GM12878 (cell line): ENCODE measurements at regions of chr17 and their contacts with region 1.

Region 1: GRCh38 chr17:8222630-8223356 is 12.4 kb upstream of the AURKB start:
- DNase-seq: peak; percentile 81
- ATAC-seq: peak; percentile 56
- H3K4me3 ChIP-seq: peak overlapping the region; percentile 83
- H3K27ac ChIP-seq: peak overlapping the region; percentile 97
- H3K4me1 ChIP-seq: peaks cover 27% of the 10 kb centered on the region
- H3K27me3 ChIP-seq: no peaks in the 10 kb centered on the region
- CTCF ChIP-seq: no peak
- EP300 ChIP-seq: peak in 1 of 2 experiments; percentile 12; a peak in 1 of 4 replicates
- POLR2A ChIP-seq: peak; percentile 81
- RAD21 ChIP-seq: no peak

Region 2: DNA sequence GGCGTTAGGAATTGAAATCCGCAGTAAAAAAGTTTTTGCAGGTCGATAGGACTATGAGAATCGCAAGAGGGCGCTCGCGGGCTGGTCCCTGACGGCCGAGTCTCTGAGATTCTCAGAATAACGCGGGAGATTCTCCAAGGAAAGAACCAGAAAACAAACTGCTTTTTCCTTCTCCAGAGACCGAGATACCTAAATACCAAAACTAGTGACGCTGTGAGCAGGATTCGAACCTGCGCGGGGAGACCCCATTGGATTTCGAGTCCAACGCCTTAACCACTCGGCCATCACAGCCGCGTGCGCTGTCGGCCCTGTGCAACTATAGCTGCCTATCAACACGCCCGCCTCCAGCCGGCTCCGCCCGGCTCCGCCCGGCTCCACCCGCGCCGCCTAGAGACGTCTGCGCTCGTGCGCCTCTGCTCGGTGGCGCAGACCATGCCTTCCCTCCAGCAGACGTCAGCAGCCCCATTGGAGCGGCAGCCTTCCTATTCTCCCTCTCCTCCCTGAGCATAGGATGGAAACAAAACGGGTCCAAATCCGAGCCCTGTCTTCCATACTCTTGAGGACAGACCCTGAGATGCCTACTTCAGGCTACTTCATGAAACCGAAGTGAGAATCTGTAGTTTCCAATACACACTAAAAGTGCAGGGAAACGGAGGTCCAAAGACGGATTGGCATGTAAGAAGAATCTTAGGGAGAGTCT is 84.0 kb before region 1 on chr17:
- CTCF ChIA-PET with region 1: interaction called, 11 read pairs
- POLR2A ChIA-PET with region 1: interaction called, 3 read pairs
- RAD21 ChIA-PET with region 1: interaction called, 6 read pairs
- SMC1A ChIA-PET with region 1: interaction called, 15 read pairs
- in situ Hi-C with region 1: no loop called
- intact Hi-C with region 1: loop called (anchors 5 kb)
- DNase-seq: peak; percentile 94
- ATAC-seq: peak; percentile 93
- H3K4me3 ChIP-seq: peak overlapping the region; percentile 72
- H3K27ac ChIP-seq: peak overlapping the region; percentile 97
- H3K4me1 ChIP-seq: peaks cover 7% of the 10 kb centered on the region
- H3K27me3 ChIP-seq: no peaks in the 10 kb centered on the region
- CTCF ChIP-seq: peak; percentile 68 to 78 (median 76)
- EP300 ChIP-seq: 0 out of 4 replicates have a peak, but pooled peaks of 1 of the 2 experiments have one; percentile 4
- POLR2A ChIP-seq: peak; percentile 81
- RAD21 ChIP-seq: peak; percentile 57

Region 3: DNA sequence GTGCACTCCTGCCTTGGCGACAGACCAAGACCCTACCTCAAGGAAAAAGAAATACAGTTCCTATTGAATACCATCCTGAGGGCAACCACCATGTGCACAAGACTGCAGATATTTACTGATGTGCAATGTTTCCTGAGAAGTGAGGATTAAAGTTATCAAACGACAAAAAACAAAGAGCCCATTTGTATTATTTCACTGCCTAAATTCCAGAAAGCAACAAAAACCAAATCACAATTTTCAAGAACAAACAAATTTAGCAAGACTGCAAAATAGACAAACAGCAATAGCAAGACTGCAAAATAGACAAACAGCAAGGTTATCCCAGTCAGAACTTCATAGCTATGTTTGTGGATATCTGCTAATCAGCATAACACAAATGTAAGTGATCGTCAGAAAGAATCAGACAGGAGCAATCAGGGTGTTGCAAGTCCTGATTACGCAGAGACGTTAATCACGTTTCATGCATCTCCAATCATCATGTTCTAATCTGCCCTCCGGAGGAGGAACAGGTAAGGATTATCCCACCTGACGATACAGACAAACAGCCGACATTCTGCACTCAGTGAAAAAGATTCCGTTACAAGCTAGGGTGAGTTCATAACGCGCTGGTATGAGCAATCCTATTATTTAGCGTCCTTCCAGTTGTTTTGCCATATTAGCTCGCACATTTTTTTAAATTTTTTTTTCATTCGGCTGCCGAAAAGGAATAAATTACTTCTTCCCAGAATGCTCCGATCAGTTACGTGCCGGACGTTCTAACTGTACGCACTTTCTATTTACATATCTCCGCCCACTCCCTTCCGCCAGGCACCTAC is 49.5 kb before region 1 on chr17:
- CTCF ChIA-PET with region 1: no interaction called
- POLR2A ChIA-PET with region 1: interaction called, 7 read pairs
- RAD21 ChIA-PET with region 1: interaction called, 7 read pairs
- SMC1A ChIA-PET with region 1: interaction called, 6 read pairs
- in situ Hi-C with region 1: no loop called
- intact Hi-C with region 1: loop called (anchors 5 kb)
- DNase-seq: peak; percentile 98
- ATAC-seq: peak; percentile 86
- H3K4me3 ChIP-seq: peak overlapping the region; percentile 65
- H3K27ac ChIP-seq: peak overlapping the region; percentile 99
- H3K4me1 ChIP-seq: peaks cover 14% of the 10 kb centered on the region
- H3K27me3 ChIP-seq: no peaks in the 10 kb centered on the region
- CTCF ChIP-seq: no peak
- EP300 ChIP-seq: peak in 1 of 2 experiments; percentile 59; a peak in 2 of 4 replicates
- POLR2A ChIP-seq: peak; percentile 99
- RAD21 ChIP-seq: no peak

Region 4: GRCh38 chr17:8209909-8210760 is 12.7 kb before region 1 on chr17 and contains the start of gene AURKB:
- CTCF ChIA-PET with region 1: interaction called, 21 read pairs
- POLR2A ChIA-PET with region 1: interaction called, 89 read pairs
- RAD21 ChIA-PET with region 1: interaction called, 12 read pairs
- SMC1A ChIA-PET with region 1: interaction called, 56 read pairs
- in situ Hi-C with region 1: no loop called
- intact Hi-C with region 1: no loop called
- DNase-seq: peak; percentile 91
- ATAC-seq: peak; percentile 94
- H3K4me3 ChIP-seq: peak within 1 kb of the TSS; percentile 95
- H3K27ac ChIP-seq: peak within 1 kb of the TSS; percentile 83
- H3K4me1 ChIP-seq: no peaks in the 10 kb centered on the region
- H3K27me3 ChIP-seq: no peaks in the 10 kb centered on the region
- CTCF ChIP-seq: no peak
- EP300 ChIP-seq: no peak; a peak in 1 of 4 replicates
- POLR2A ChIP-seq: peak; percentile 96
- RAD21 ChIP-seq: no peak
- polyA plus RNA-seq, gene AURKB: 107 to 121 TPM

Region 5: GRCh38 chr17:8288336-8289102 is 65.7 kb after region 1 on chr17 and contains the start of gene RANGRF:
- CTCF ChIA-PET with region 1: interaction called, 14 read pairs
- POLR2A ChIA-PET with region 1: interaction called, 6 read pairs
- RAD21 ChIA-PET with region 1: interaction called, 3 read pairs
- SMC1A ChIA-PET with region 1: interaction called, 40 read pairs
- in situ Hi-C with region 1: no loop called
- intact Hi-C with region 1: no loop called
- DNase-seq: peak; percentile 40
- ATAC-seq: peak; percentile 95
- H3K4me3 ChIP-seq: peak within 1 kb of the TSS; percentile 93
- H3K27ac ChIP-seq: peak within 1 kb of the TSS; percentile 92
- H3K4me1 ChIP-seq: peaks cover 19% of the 10 kb centered on the region
- H3K27me3 ChIP-seq: no peaks in the 10 kb centered on the region
- CTCF ChIP-seq: no peak
- EP300 ChIP-seq: no peak
- POLR2A ChIP-seq: peak; percentile 70
- RAD21 ChIP-seq: no peak
- polyA plus RNA-seq, gene RANGRF: 123 to 181 TPM

Region 6: DNA sequence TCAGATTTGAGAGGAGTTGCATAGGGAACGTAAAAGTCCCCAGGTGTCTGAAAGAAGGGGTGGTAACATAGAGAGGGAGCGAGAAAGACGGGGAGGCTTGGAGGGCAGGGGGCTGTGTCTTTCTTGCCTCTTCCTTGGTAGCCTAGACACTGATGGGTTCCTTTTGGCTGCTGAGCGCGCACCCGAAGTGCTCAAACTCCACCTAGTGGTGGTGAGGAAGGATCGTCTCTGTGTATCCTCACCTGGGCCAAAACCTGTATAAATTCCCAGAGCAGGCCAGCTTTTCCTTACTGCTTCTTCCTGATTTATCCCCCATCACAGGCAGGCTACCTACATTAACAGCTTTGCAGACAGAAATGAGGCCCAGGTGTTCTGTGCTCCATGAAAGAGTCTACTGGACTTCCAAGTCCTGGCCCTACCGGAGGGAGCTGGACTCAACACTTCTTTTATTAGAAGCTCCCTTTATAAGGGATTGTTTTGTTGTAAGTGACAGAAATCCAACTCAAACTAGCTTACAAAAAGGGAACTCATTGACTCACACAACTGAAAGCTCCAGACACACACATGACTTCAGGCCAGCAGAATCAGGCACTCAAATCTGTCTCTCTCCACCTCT is 77.9 kb after region 1 on chr17:
- CTCF ChIA-PET with region 1: interaction called, 38 read pairs
- POLR2A ChIA-PET with region 1: interaction called, 31 read pairs
- RAD21 ChIA-PET with region 1: interaction called, 19 read pairs
- SMC1A ChIA-PET with region 1: interaction called, 54 read pairs
- in situ Hi-C with region 1: no loop called
- intact Hi-C with region 1: loop called (anchors 1 kb)
- DNase-seq: peak; percentile 31
- ATAC-seq: peak; percentile 98
- H3K4me3 ChIP-seq: no peak overlapping the region
- H3K27ac ChIP-seq: no peak overlapping the region
- H3K4me1 ChIP-seq: no peaks in the 10 kb centered on the region
- H3K27me3 ChIP-seq: no peaks in the 10 kb centered on the region
- CTCF ChIP-seq: peak; percentile 86 to 96 (median 90); a peak in 5 of 6 replicates
- EP300 ChIP-seq: no peak
- POLR2A ChIP-seq: no peak
- RAD21 ChIP-seq: peak; percentile 90

Region 7: DNA sequence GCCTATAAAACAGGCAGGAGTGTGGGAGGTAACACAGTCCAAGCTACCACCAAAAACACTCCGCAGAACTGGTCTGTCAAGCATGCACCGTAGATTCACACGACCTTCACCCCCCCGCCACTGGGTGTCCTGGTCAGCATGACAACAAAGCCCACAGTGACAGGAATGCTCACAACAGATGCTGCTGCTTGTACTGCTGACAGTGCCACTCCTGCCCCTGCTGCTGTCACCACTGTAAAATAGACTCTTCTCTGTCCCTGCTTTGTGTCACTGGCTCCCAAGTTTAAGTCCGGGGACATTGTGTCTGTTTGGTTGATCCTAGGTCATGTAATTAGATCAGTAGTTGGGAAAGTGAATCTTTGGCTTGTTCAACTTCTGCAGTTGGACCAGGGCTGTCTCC is 109.9 kb after region 1 on chr17:
- CTCF ChIA-PET with region 1: no interaction called
- POLR2A ChIA-PET with region 1: no interaction called
- RAD21 ChIA-PET with region 1: no interaction called
- SMC1A ChIA-PET with region 1: no interaction called
- in situ Hi-C with region 1: no loop called
- intact Hi-C with region 1: no loop called
- DNase-seq: no peak
- ATAC-seq: no peak
- H3K4me3 ChIP-seq: no peak overlapping the region
- H3K27ac ChIP-seq: no peak overlapping the region
- H3K4me1 ChIP-seq: no peaks in the 10 kb centered on the region
- H3K27me3 ChIP-seq: no peaks in the 10 kb centered on the region; a peak in 1 of 4 replicates
- CTCF ChIP-seq: no peak
- EP300 ChIP-seq: no peak
- POLR2A ChIP-seq: no peak
- RAD21 ChIP-seq: no peak

Region 8: DNA sequence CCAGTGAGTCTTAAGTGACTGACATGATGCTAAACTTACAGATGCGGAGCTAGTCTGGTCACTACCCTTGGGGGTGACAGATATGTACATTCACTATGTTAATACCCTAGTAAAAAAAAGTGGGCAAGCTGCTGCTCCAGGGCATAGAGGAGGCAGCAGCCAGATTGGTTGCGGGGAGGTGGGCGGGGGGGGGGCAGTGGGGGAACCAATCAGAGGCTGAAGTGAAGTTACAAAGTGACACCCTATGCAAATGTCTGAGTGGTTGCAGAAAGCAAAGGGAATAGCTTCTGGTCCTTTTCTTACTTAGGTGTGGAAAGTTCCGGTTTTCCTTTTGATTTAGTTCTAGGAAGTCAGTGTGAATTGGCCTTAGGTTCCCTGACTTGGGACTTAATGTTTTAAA is 225.0 kb after region 1 on chr17:
- CTCF ChIA-PET with region 1: no interaction called
- POLR2A ChIA-PET with region 1: no interaction called
- RAD21 ChIA-PET with region 1: no interaction called
- SMC1A ChIA-PET with region 1: no interaction called
- in situ Hi-C with region 1: no loop called
- intact Hi-C with region 1: no loop called
- DNase-seq: no peak
- ATAC-seq: no peak
- H3K4me3 ChIP-seq: no peak overlapping the region
- H3K27ac ChIP-seq: no peak overlapping the region
- H3K4me1 ChIP-seq: no peaks in the 10 kb centered on the region
- H3K27me3 ChIP-seq: no peaks in the 10 kb centered on the region
- CTCF ChIP-seq: no peak
- EP300 ChIP-seq: no peak
- POLR2A ChIP-seq: no peak
- RAD21 ChIP-seq: no peak